Psoas muscle (tissue), 8 donors: ENCODE measurements at regions of chr17 and their contacts with region 1.

Region 1: DNA sequence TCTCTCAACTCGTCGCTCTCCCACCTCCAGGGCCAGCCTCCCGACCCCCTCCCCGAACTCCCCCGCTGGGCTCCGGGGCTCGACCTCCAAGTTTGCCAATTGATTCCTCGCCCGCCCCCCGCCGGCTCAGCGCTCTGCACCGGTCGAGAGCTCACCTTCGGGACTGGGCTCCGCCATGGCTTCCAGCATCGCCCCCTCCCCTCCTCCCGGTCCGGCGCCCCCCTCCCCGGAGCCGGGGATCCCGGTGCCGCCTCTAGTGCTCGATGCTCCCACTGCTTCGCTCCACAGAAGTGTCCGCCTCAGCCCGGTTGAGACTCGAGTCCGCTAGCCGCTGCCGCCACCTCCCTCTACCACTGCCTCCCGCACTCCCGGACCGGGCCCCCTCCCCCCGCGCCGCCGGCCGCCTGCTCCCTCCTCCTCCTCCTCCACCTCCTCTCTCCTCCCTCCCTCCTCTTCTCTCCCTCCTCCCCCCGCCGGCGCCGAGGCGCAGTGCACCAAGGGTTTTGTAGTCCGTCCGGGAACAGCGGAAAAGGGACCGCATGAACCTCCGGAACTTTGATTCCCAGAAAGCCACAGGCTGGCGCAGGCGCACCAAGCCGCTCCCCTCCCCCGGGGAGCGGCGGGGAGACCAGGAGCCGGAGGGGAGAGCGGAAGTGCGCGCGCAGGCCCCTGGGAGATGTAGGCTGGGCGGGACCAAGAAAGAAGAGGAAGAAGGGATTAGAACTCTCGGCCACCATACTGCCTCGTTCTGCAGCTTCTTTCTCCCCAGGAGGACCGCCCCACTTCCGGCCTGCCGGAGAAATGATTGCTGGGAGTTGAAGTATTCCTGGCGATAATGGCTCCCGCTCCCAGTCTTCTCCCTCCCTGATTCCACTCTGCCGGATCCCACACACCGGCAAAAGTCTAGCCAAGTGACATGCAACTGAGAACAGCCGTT is at the start of gene PHF23:
- DNase-seq: peak; percentile 99 to 100
- ATAC-seq: peak; percentile 73 to 79 (median 76)
- H3K4me3 ChIP-seq: peak within 1 kb of the TSS; percentile 96
- H3K27ac ChIP-seq: peak within 1 kb of the TSS; percentile 96
- H3K4me1 ChIP-seq: peaks cover 33% of the 10 kb centered on the region
- H3K27me3 ChIP-seq: no peaks in the 10 kb centered on the region
- CTCF ChIP-seq: no peak
- total RNA-seq, gene PHF23: 20.9 to 28.8 (median 27.7) TPM

Region 2: DNA sequence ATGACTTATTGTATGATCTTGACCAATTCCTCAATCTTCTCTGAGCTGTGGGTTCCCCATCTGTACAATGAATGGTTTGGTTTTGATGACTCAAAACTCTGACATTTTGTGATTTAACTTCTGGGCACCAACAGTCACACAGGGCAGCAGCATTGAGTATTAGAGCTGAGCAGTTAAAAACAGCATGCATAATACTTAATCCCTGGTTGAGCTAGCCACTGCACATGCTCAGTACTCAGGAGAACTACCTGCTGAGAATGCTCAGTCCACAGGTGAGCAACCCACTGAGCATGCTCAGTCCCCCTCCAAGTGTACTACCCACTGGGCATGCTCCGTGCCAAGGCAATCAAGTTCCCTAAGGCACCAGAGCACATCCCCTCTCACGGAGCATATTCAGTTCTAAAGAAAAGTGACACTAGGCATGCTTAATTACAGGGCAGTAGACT is 873.1 kb before region 1 on chr17:
- intact Hi-C with region 1: no loop called
- DNase-seq: no peak
- ATAC-seq: no peak
- H3K4me3 ChIP-seq: no peak overlapping the region
- H3K27ac ChIP-seq: no peak overlapping the region
- H3K4me1 ChIP-seq: no peaks in the 10 kb centered on the region
- H3K27me3 ChIP-seq: no peaks in the 10 kb centered on the region
- CTCF ChIP-seq: no peak

Region 3: DNA sequence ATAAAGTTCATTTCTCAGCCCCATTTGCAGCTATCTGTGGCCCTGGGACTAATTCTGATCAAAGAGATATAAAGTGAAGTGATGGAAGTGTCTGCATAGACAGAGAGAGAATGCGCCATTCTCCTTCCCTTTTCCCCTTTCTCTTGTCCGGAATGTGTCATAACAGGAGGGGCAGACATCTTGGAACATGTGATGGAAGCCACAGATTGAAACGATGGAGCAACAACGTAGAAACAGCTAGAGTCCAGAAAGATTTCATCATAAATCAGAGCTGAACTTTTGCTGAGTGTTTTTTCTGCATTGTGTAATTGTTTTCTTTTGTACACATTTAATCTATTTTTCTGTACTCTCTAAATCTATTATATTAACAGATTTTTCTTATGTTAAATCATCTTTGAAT is 71.5 kb before region 1 on chr17:
- intact Hi-C with region 1: no loop called
- DNase-seq: no peak
- ATAC-seq: no peak
- H3K4me3 ChIP-seq: no peak overlapping the region
- H3K27ac ChIP-seq: no peak overlapping the region
- H3K4me1 ChIP-seq: no peaks in the 10 kb centered on the region
- H3K27me3 ChIP-seq: peaks cover 0 to 18% (median 1%) of the 10 kb centered on the region in 3 donors
- CTCF ChIP-seq: no peak

Region 4: DNA sequence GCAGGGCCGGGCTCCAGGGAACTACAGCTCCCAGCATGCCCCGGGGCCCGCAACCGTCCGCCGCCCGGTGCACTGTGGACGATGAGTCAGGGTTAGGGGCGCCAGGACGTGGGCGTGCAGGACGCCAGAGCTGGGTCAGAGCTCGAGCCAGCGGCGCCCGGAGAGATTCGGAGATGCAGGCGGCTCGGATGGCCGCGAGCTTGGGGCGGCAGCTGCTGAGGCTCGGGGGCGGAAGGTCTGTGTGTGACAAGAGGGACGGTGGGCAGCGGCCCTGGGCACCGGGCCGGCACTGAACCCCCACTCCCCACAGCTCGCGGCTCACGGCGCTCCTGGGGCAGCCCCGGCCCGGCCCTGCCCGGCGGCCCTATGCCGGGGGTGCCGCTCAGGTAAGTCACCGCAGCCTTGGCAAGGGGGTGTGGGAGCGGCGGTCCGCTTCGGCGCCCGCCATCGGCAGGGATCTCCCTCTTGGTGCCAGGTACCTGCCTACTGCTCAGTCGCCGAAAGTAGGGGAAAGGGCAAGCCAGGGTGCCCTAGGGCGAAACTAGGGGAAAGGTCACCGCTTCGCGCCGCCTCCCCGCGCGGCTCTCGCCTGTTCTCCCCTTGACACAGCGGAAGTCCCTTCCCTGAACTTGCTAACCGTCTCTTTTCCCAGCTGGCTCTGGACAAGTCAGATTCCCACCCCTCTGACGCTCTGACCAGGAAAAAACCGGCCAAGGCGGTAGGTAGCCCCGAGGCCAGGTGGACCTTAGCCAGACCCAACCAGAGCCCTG is 19.4 kb before region 1 on chr17 and contains the starts of genes ACADVL and DLG4:
- intact Hi-C with region 1: loop called in 1 of 2 experiments (anchors 2 kb)
- DNase-seq: peak; percentile 97
- ATAC-seq: peak; percentile 86 to 88 (median 86)
- H3K4me3 ChIP-seq: peak within 1 kb of the TSS; percentile 98
- H3K27ac ChIP-seq: peak within 1 kb of the TSS; percentile 99
- H3K4me1 ChIP-seq: peaks cover 34% of the 10 kb centered on the region
- H3K27me3 ChIP-seq: no peaks in the 10 kb centered on the region
- CTCF ChIP-seq: no peak
- total RNA-seq, gene ACADVL: 987 to 1,310 (median 1,099) TPM
- total RNA-seq, gene DLG4: 3.2 to 8.9 (median 5.8) TPM

Region 5: GRCh38 chr17:7280519-7281429 is 41.4 kb after region 1 on chr17:
- intact Hi-C with region 1: loop called in 1 of 2 experiments (anchors 2 kb)
- DNase-seq: peak; percentile 85 to 93
- ATAC-seq: peak; percentile 67 to 78 (median 70)
- H3K4me3 ChIP-seq: peak overlapping the region; percentile 86
- H3K27ac ChIP-seq: peak overlapping the region; percentile 96
- H3K4me1 ChIP-seq: peaks cover 29% of the 10 kb centered on the region
- H3K27me3 ChIP-seq: no peaks in the 10 kb centered on the region
- CTCF ChIP-seq: peak; percentile 89

Region 6: GRCh38 chr17:7351665-7352501 is 112.5 kb after region 1 on chr17 and contains the start of gene KCTD11:
- intact Hi-C with region 1: no loop called
- DNase-seq: peak; percentile 94 to 95
- ATAC-seq: peak; percentile 75 to 80 (median 78)
- H3K4me3 ChIP-seq: peak within 1 kb of the TSS; percentile 98
- H3K27ac ChIP-seq: peak within 1 kb of the TSS; percentile 100
- H3K4me1 ChIP-seq: peaks cover 51% of the 10 kb centered on the region
- H3K27me3 ChIP-seq: no peaks in the 10 kb centered on the region
- CTCF ChIP-seq: no peak
- total RNA-seq, gene KCTD11: 4.5 to 5.2 (median 5.1) TPM

Region 7: GRCh38 chr17:7413346-7413985 is 174.1 kb after region 1 on chr17:
- intact Hi-C with region 1: no loop called
- DNase-seq: peak in 1 of 2 donors; percentile 46
- ATAC-seq: peak in 1 of 4 donors; percentile 10
- H3K4me3 ChIP-seq: no peak overlapping the region
- H3K27ac ChIP-seq: no peak overlapping the region
- H3K4me1 ChIP-seq: no peaks in the 10 kb centered on the region
- H3K27me3 ChIP-seq: no peaks in the 10 kb centered on the region
- CTCF ChIP-seq: no peak

Region 8: GRCh38 chr17:7561028-7561575 is 321.7 kb after region 1 on chr17:
- intact Hi-C with region 1: loop called in 1 of 2 experiments (anchors 10 kb)
- DNase-seq: peak; percentile 92 to 96
- ATAC-seq: peak; percentile 82 to 88 (median 84)
- H3K4me3 ChIP-seq: peak overlapping the region; percentile 96
- H3K27ac ChIP-seq: peak overlapping the region; percentile 94
- H3K4me1 ChIP-seq: peaks cover 45% of the 10 kb centered on the region
- H3K27me3 ChIP-seq: no peaks in the 10 kb centered on the region
- CTCF ChIP-seq: peak; percentile 86

Region 9: DNA sequence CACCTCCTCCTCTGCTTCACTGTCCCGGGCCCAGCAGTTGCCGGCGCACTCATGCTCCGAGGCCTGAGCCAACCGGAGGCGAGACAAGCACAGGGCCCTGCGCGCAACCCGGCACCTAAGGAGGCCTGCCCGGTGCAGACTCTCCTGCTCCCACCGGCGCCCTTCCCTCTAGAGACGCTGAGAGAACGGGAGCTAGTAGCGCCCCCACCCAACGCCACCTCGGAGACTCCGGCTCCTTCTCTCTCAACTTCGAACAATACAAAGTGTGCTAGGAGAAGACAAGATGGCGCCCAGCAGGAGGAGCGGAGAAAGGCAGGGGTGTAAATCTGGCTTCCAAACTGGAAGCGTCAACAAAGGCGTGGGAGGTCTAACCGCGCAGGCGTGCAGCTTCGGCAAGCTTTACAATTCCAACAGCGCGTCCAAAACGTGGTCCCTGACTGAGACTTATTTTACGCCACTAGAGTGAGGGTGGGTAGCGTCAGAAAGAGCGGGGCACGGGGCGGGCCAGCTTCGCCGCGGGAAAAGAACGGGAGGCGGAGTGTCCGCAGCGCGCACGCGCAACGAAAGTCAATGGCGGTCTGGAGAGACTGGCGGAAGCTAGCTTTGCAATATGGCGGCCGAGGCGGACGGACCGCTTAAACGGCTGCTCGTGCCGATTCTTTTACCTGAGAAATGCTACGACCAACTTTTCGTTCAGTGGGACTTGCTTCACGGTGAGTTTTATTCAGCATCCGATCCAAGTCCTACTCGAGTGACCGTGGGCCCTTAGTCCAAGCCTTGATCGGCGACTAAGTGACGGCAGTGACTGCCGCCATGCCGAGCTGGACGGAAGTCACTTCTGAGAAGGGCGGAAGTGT is 344.1 kb after region 1 on chr17 and contains the start of gene MPDU1:
- intact Hi-C with region 1: loop called in 1 of 2 experiments (anchors 10 kb)
- DNase-seq: peak; percentile 98 to 99
- ATAC-seq: peak; percentile 81 to 87 (median 82)
- H3K4me3 ChIP-seq: peak within 1 kb of the TSS; percentile 78
- H3K27ac ChIP-seq: peak within 1 kb of the TSS; percentile 89
- H3K4me1 ChIP-seq: peaks cover 42% of the 10 kb centered on the region
- H3K27me3 ChIP-seq: no peaks in the 10 kb centered on the region
- CTCF ChIP-seq: no peak
- total RNA-seq, gene MPDU1: 19.3 to 40.6 (median 34.1) TPM

Region 10: GRCh38 chr17:8138672-8139371 is 899.5 kb after region 1 on chr17:
- intact Hi-C with region 1: loop called in 1 of 2 experiments (anchors 10 kb)
- DNase-seq: peak; percentile 91 to 97
- ATAC-seq: peak; percentile 81 to 87 (median 82)
- H3K4me3 ChIP-seq: peak overlapping the region; percentile 48
- H3K27ac ChIP-seq: peak overlapping the region; percentile 93
- H3K4me1 ChIP-seq: peaks cover 33% of the 10 kb centered on the region
- H3K27me3 ChIP-seq: no peaks in the 10 kb centered on the region
- CTCF ChIP-seq: peak; percentile 91